ENCODE measurements at regions of chr3 and their contacts with region 1.

Region 1: GRCh38 chr3:58188173-58188564 is 22.6 kb downstream of the DNASE1L3 start:
- DNase-seq: no peak
- ATAC-seq: no peak
- H3K4me3 ChIP-seq: no peak overlapping the region
- H3K4me3 Mint-ChIP-seq: no peak overlapping the region
- H3K27ac ChIP-seq: no peak overlapping the region
- H3K27ac Mint-ChIP-seq: no peak overlapping the region
- H3K4me1 ChIP-seq: peaks cover 0 to 5% of the 10 kb centered on the region in 2 donors
- H3K4me1 Mint-ChIP-seq: peaks cover 3% of the 10 kb centered on the region
- H3K27me3 ChIP-seq: no peaks in the 10 kb centered on the region
- H3K27me3 Mint-ChIP-seq: no peaks in the 10 kb centered on the region
- CTCF ChIP-seq: no peak

Region 2: DNA sequence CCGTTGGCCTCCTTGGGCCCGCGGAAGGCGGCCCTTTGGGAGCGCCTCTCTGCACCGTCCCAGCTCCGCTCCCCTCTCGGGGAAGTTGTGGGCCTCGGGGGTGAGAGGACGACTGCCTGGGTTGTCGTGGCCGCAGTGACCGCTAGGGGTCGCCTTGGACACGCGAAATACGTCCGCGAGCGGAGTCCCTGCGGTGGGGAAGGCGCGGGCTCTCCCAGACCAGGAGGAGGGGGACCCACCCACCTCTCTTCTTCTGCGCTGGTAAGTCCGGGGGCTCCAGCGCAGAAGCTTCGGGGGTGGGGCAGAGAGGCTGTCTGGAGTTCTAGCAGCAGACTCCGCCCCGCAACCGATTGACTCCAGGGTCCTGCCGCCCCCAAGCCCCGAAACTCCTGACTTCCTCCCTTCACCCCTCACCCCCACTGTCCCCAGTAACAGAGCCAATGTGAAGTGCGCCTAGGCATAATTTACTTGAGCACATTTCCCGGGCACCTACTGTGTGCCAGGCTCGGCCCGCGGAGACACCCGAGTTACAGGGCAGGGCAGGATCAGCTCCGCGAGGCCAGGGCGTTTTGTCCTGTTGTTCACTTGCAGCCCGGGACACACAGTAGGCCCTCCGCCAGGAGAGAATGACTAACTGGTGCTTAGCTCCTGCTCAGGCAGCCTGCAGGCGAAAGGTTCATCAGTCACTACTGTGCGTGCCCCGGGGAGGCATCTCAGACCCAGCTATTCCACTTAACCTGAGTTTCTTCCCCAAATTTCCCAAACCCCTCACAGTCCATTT is 10.2 kb before region 1 on chr3:
- CTCF ChIA-PET with region 1: interaction called, 40 read pairs
- POLR2A ChIA-PET with region 1: no interaction called
- intact Hi-C with region 1: no loop called
- DNase-seq: peak; percentile 90
- ATAC-seq: peak; percentile 96
- H3K4me3 ChIP-seq: peak overlapping the region in 4 of 5 experiments; percentile 38 to 66 (median 56)
- H3K4me3 Mint-ChIP-seq: peak overlapping the region; percentile 86
- H3K27ac ChIP-seq: no peak overlapping the region
- H3K27ac Mint-ChIP-seq: peak overlapping the region; percentile 50
- H3K4me1 ChIP-seq: peaks cover 19 to 24% of the 10 kb centered on the region in 2 donors
- H3K4me1 Mint-ChIP-seq: peaks cover 27% of the 10 kb centered on the region
- H3K27me3 ChIP-seq: peaks cover 0 to 8% (median 3%) of the 10 kb centered on the region in 4 experiments
- H3K27me3 Mint-ChIP-seq: no peaks in the 10 kb centered on the region
- CTCF ChIP-seq: peak; percentile 88

Region 3: DNA sequence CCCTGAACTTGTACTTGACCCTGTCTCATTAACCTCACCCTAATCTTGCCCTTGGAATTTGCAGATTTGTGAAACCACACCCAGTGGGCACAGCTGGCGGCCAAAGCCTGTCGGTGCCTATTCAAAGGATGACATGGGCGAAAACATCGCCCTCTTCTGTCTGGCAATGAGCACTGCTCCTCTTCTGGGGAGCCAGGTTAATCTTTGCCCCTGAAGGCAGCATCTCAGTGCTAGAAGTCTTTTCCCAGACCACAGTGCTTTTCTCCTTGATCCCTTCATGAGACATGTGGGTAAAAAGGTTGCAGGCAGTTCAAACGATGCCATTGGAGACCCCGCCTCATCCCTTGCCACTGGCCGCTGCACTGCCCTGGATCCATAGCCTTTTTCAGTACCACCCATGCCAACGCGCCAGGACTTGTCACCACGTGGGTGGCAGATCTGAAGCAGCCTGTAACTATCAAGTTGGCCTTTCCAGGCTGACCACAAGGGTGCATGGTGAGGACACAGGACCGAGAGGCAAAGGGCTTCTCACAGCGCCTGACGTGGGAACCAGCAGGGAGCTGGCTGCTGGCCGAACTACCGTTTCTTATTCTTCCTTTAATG is 29.1 kb after region 1 on chr3:
- CTCF ChIA-PET with region 1: interaction called, 336 read pairs
- POLR2A ChIA-PET with region 1: interaction called, 5 read pairs
- intact Hi-C with region 1: loop called (anchors 1 kb)
- DNase-seq: peak; percentile 84
- ATAC-seq: peak; percentile 60
- H3K4me3 ChIP-seq: peak overlapping the region in 4 of 5 experiments; percentile 34 to 61 (median 48)
- H3K4me3 Mint-ChIP-seq: peak overlapping the region; percentile 79
- H3K27ac ChIP-seq: peak overlapping the region in 1 of 2 donors; percentile 52
- H3K27ac Mint-ChIP-seq: peak overlapping the region; percentile 69
- H3K4me1 ChIP-seq: peaks cover 52 to 58% of the 10 kb centered on the region in 2 donors
- H3K4me1 Mint-ChIP-seq: peaks cover 49% of the 10 kb centered on the region
- H3K27me3 ChIP-seq: no peaks in the 10 kb centered on the region
- H3K27me3 Mint-ChIP-seq: no peaks in the 10 kb centered on the region
- CTCF ChIP-seq: peak; percentile 97

Region 4: DNA sequence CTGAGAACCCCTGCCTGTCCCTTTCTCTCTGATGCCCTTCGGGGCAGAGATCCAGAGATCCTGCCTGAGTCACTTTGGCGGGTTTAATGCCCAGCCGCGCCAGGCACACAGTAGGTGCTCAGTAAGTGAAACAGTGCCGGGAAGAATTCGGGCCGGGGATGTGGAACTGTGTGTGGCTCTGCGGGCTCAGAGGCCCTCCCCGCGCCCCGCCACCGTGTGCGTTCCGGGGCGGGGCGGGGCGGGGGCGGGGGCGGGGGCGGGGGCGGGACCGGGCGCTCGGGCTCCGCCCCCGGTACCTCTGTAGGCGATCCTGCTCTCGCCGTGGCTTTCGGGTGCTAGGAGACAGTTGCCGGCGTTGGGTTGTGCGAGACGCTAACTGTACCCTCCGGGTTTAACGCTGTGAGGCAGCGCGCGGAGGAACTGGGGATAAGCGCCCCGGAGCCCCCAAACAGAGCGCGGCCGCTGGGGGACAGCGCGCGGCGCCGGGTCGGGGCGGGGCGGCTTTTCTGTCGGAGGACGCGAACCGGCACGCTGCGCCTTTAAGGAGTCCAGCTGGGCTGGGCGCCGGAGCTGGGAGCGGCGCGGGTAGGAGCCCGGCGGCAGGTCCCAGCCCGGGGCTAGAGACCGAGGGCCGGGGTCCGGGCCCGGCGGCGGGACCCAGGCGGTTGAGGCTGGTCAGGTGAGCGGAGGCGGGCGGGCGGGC is 49.2 kb after region 1 on chr3 and contains the start of gene ABHD6:
- CTCF ChIA-PET with region 1: interaction called, 29 read pairs
- POLR2A ChIA-PET with region 1: interaction called, 3 read pairs
- intact Hi-C with region 1: no loop called
- DNase-seq: peak; percentile 93
- ATAC-seq: peak; percentile 75
- H3K4me3 ChIP-seq: peak within 1 kb of the TSS; percentile 51 to 96 (median 93)
- H3K4me3 Mint-ChIP-seq: peak within 1 kb of the TSS; percentile 97
- H3K27ac ChIP-seq: peak within 1 kb of the TSS; percentile 63 to 86
- H3K27ac Mint-ChIP-seq: peak within 1 kb of the TSS; percentile 94
- H3K4me1 ChIP-seq: peaks cover 41 to 48% of the 10 kb centered on the region in 2 donors
- H3K4me1 Mint-ChIP-seq: peaks cover 70% of the 10 kb centered on the region
- H3K27me3 ChIP-seq: no peaks in the 10 kb centered on the region
- H3K27me3 Mint-ChIP-seq: no peaks in the 10 kb centered on the region
- CTCF ChIP-seq: peak; percentile 15
- total RNA-seq, gene ABHD6: 22.2 and 24.2 TPM in 2 replicates

Region 5: DNA sequence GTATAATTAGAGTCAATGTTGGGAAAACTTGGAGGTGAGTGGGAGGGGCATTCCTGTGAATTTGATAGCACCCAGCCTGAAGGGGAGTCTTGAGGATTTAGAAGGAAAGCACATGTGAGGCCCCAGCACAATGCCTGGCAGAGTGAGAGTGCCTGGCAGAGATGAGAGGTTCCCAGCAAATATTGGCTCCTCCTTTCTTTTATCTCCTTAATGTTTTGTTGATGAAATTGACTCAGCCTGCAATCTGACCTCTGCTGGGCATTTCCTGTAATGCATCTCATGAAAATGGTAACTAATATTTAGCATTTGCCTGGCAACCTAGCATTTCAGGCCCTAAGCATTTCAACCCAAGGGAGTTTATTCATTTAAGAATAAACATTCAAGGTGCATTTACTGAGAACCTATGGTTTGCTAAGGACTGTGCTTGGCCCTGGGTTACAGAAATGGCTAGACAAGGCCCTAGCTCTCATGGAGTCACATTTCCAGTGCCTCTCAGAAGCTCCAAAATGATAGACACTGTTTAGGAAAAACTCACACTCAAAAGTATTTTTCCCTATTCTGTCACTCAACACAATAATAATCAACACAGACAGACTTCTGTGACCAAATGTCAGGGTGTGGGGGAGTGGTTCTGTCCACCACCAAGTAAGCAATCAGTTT is 226.5 kb after region 1 on chr3:
- CTCF ChIA-PET with region 1: interaction called, 6 read pairs
- POLR2A ChIA-PET with region 1: no interaction called
- intact Hi-C with region 1: loop called (anchors 5 kb)
- DNase-seq: peak; percentile 80
- ATAC-seq: peak; percentile 77
- H3K4me3 ChIP-seq: no peak overlapping the region
- H3K4me3 Mint-ChIP-seq: no peak overlapping the region
- H3K27ac ChIP-seq: peak overlapping the region; percentile 27 to 46
- H3K27ac Mint-ChIP-seq: peak overlapping the region; percentile 68
- H3K4me1 ChIP-seq: peaks cover 14 to 18% of the 10 kb centered on the region in 2 donors
- H3K4me1 Mint-ChIP-seq: peaks cover 46% of the 10 kb centered on the region
- H3K27me3 ChIP-seq: no peaks in the 10 kb centered on the region
- H3K27me3 Mint-ChIP-seq: no peaks in the 10 kb centered on the region
- CTCF ChIP-seq: peak; percentile 77

Region 6: GRCh38 chr3:58630076-58630709 is 442.0 kb after region 1 on chr3:
- CTCF ChIA-PET with region 1: interaction called, 5 read pairs
- POLR2A ChIA-PET with region 1: no interaction called
- intact Hi-C with region 1: loop called (anchors 5 kb)
- DNase-seq: peak; percentile 71
- ATAC-seq: peak; percentile 76
- H3K4me3 ChIP-seq: no peak overlapping the region
- H3K4me3 Mint-ChIP-seq: no peak overlapping the region
- H3K27ac ChIP-seq: no peak overlapping the region
- H3K27ac Mint-ChIP-seq: no peak overlapping the region
- H3K4me1 ChIP-seq: peaks cover 0 to 6% of the 10 kb centered on the region in 2 donors
- H3K4me1 Mint-ChIP-seq: no peaks in the 10 kb centered on the region
- H3K27me3 ChIP-seq: peaks cover 0 to 19% (median 0%) of the 10 kb centered on the region in 4 experiments
- H3K27me3 Mint-ChIP-seq: peaks cover 18% of the 10 kb centered on the region
- CTCF ChIP-seq: peak; percentile 92